Common myeloid progenitor, CD34-positive (primary cell): ENCODE measurements at regions of chr9 and their contacts with region 1.

Region 1: GRCh38 chr9:613771-614347 is 227.6 kb upstream of the DMRT1 start:
- DNase-seq: peak; percentile 94 to 95 (median 94)
- H3K4me3 ChIP-seq: peak overlapping the region in 2 of 7 experiments; percentile 43 to 47
- H3K27ac ChIP-seq: peak overlapping the region in 1 of 2 experiments; percentile 18
- H3K4me1 ChIP-seq: peaks cover 0 to 8% (median 3%) of the 10 kb centered on the region in 4 experiments
- H3K27me3 ChIP-seq: peaks cover 0 to under 1% (median 0%) of the 10 kb centered on the region in 5 experiments

Region 2: DNA sequence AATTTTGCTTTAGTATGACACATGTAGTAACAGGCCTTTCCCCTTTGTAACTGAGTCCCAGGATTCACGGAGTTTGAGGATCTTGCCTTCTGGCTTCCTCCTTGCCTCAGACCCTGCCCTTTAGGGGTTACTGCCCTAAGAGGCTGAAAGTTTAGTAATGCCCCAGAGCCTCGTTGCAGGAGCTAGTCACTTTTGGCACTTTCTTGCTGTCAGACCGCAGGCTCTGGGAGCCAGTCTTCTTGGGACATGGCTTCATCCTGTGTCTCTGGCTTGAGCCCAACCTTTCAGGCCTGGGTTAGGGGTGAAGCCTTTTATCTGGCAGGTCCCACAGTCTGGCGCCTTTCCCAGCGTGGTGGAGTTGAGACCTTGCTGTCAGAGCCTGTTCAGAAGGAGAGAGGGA is 42.0 kb after region 1 on chr9:
- CTCF ChIA-PET with region 1: no interaction called
- POLR2A ChIA-PET with region 1: no interaction called
- DNase-seq: no peak
- H3K4me3 ChIP-seq: no peak overlapping the region
- H3K27ac ChIP-seq: no peak overlapping the region
- H3K4me1 ChIP-seq: peaks cover 5 to 72% (median 42%) of the 10 kb centered on the region in 4 experiments
- H3K27me3 ChIP-seq: no peaks in the 10 kb centered on the region

Region 3: DNA sequence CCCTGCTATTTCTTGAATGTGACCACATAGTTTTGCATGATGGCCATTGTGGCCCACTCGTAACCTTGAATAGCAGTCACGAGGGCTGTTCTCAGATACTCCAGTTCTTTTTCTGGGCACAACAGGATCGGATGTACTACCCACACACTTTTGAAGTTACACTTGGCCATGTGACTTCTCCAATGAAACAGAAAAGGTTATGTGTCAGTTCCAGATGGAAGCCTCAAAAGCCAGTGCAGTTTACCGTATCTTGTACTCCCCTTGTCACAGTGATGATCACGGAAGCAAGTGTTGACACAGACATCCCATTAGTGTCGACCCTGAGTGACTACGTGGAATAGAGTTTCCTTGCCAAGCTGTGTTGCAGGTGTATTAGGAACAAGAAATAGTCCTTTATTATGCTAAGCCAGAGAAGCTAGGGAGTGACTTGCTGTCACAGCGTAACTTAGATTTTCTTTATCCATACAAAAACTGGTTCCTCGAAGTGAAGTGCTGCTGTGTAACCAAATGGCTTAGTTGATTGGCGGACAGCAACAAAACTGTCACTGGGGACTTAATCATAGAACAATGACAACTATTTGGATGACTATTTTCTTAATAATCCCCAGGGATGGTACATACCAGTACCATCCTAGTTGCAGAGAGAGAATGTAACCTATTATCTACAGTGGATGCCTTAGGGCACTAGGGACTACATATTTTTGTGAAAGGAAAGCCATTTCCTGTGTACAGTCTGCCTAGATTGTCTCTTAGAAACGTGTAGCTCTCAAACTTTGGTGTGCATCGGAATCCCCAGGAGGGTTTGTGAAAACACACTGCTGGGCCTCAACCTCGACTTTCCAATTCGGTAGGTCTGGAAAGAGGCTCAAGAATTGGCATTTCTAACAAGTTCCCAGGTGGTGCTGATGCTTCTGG is 137.5 kb after region 1 on chr9:
- CTCF ChIA-PET with region 1: interaction called, 231 read pairs
- POLR2A ChIA-PET with region 1: no interaction called
- DNase-seq: no peak
- H3K4me3 ChIP-seq: no peak overlapping the region
- H3K27ac ChIP-seq: no peak overlapping the region
- H3K4me1 ChIP-seq: peaks cover 20 to 65% (median 58%) of the 10 kb centered on the region in 4 experiments
- H3K27me3 ChIP-seq: no peaks in the 10 kb centered on the region

Region 4: DNA sequence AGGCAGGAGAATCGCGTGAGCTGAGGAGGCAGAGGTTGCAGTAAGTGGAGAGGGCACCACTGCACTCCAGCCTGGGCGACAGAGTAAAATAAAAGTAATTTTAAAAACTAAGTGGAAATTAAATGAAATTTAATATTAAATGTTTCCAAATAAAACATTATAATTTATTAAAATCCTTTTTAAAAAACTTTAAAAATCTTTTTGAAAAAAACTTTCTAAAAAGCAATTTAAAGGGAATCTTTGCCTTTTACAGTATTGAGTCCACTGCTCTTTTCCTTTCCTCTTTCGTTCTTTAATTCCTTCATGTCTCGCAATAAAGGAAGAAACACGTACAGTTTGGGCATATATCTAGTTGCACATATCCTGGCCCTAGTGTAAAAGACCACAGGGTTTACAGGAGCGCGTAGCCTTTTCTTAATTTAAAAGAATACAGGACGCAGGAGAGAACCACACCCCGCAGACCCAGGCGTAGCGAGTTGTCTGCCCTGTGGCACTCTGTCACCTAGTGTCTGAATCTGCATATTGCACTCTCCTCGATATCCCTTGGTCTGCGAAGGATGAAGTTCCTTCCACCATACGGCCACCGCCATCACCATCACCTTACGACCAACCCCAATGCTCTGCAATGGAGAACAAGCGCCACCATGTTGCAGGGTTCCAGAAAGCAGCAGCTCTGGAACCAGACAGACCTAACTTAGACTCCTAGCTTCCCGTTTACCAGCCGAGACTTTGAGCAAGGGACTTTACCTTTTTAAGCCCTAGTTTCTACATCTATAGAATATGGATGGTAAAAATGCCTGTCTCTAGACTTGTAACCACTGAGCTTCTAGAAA is 150.0 kb after region 1 on chr9:
- CTCF ChIA-PET with region 1: interaction called, 231 read pairs
- POLR2A ChIA-PET with region 1: no interaction called
- DNase-seq: peak; percentile 69 to 91 (median 91)
- H3K4me3 ChIP-seq: peak overlapping the region in 1 of 7 experiments; percentile 51
- H3K27ac ChIP-seq: no peak overlapping the region
- H3K4me1 ChIP-seq: peaks cover 0 to 4% (median 0%) of the 10 kb centered on the region in 4 experiments
- H3K27me3 ChIP-seq: peaks cover 0 to 2% (median 0%) of the 10 kb centered on the region in 5 experiments

Region 5: GRCh38 chr9:806285-807156 is 192.7 kb after region 1 on chr9:
- CTCF ChIA-PET with region 1: interaction called, 23 read pairs
- POLR2A ChIA-PET with region 1: no interaction called
- DNase-seq: peak; percentile 46 to 72 (median 65)
- H3K4me3 ChIP-seq: no peak overlapping the region
- H3K27ac ChIP-seq: no peak overlapping the region
- H3K4me1 ChIP-seq: no peaks in the 10 kb centered on the region
- H3K27me3 ChIP-seq: no peaks in the 10 kb centered on the region